ENCODE measurements at regions of chr6 and their contacts with region 1.

Region 1: GRCh38 chr6:151087861-151088598 is 151.7 kb upstream of the AKAP12 start:
- DNase-seq: peak; percentile 49 to 88 (median 66)
- ATAC-seq: peak; percentile 97
- H3K4me3 ChIP-seq: no peak overlapping the region
- H3K27ac ChIP-seq: peak overlapping the region; percentile 0; the same call in 1 of the 3 replicates
- H3K4me1 ChIP-seq: peaks cover 10 to 12% of the 10 kb centered on the region in 2 experiments; a peak in 3 of 5 replicates
- H3K27me3 ChIP-seq: no peaks in the 10 kb centered on the region
- CTCF ChIP-seq: peak; percentile 23 to 47 (median 44); a peak in 2 of 6 replicates
- EP300 ChIP-seq: peak; percentile 78
- POLR2A ChIP-seq: no peak
- RAD21 ChIP-seq: peak; percentile 46 to 63

Region 2: DNA sequence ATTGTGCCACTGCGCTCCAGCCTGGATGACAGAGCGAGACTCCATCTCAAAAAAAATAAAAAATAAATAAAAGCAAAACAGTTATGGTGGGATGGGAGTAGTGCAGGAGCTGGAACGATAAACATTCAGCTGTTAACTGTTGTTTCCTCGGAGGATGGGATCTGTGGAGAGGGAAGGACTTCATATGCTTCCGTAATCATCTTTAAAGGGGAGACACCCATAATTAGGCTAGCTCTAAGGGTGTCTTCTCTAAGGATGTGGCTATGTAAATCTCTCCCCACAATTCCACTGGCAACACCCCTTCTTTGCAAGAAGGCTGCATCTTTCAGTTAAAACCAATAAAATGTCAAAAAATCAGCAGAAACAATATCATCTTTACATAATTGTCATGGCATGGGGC is 265.1 kb before region 1 on chr6:
- CTCF ChIA-PET with region 1: no interaction called
- POLR2A ChIA-PET with region 1: no interaction called
- in situ Hi-C with region 1: no loop called
- intact Hi-C with region 1: loop called (anchors 5 kb)
- DNase-seq: no peak
- ATAC-seq: no peak
- H3K4me3 ChIP-seq: no peak overlapping the region
- H3K27ac ChIP-seq: no peak overlapping the region
- H3K4me1 ChIP-seq: no peaks in the 10 kb centered on the region
- H3K27me3 ChIP-seq: peaks cover 29 to 44% of the 10 kb centered on the region in 2 experiments
- CTCF ChIP-seq: no peak
- EP300 ChIP-seq: no peak
- POLR2A ChIP-seq: no peak
- RAD21 ChIP-seq: no peak

Region 3: GRCh38 chr6:151044465-151045441 is 43.3 kb before region 1 on chr6:
- CTCF ChIA-PET with region 1: no interaction called
- POLR2A ChIA-PET with region 1: no interaction called
- in situ Hi-C with region 1: no loop called
- intact Hi-C with region 1: loop called (anchors 5 kb)
- DNase-seq: no peak
- ATAC-seq: no peak
- H3K4me3 ChIP-seq: no peak overlapping the region
- H3K27ac ChIP-seq: no peak overlapping the region
- H3K4me1 ChIP-seq: peaks cover 12 to 25% of the 10 kb centered on the region in 2 experiments; a peak in 4 of 5 replicates
- H3K27me3 ChIP-seq: no peaks in the 10 kb centered on the region
- CTCF ChIP-seq: no peak
- EP300 ChIP-seq: no peak
- POLR2A ChIP-seq: no peak
- RAD21 ChIP-seq: no peak

Measured in K562 (cell line).